Ovary (tissue), 10 donors: ENCODE measurements at regions of chr7 and their contacts with region 1.

Region 1: GRCh38 chr7:5494683-5495561 is 71.3 kb upstream of the TNRC18 start:
- DNase-seq: peak; percentile 69 to 86 (median 83)
- H3K4me3 ChIP-seq: no peak overlapping the region
- H3K27ac ChIP-seq: no peak overlapping the region
- H3K4me1 ChIP-seq: peaks cover 9% of the 10 kb centered on the region
- H3K27me3 ChIP-seq: no peaks in the 10 kb centered on the region
- CTCF ChIP-seq: peak; percentile 85 to 89 (median 89)
- EP300 ChIP-seq: no peak
- POLR2A ChIP-seq: no peak

Region 2: GRCh38 chr7:5557920-5558401 is 63.0 kb after region 1 on chr7:
- intact Hi-C with region 1: loop called in 3 of 4 experiments (anchors 1 to 2 kb)
- DNase-seq: peak; percentile 40 to 62 (median 61)
- H3K4me3 ChIP-seq: peak overlapping the region; percentile 22
- H3K27ac ChIP-seq: peak overlapping the region; percentile 98 to 99
- H3K4me1 ChIP-seq: peaks cover 12% of the 10 kb centered on the region
- H3K27me3 ChIP-seq: no peaks in the 10 kb centered on the region
- CTCF ChIP-seq: no peak
- EP300 ChIP-seq: no peak
- POLR2A ChIP-seq: no peak

Region 3: DNA sequence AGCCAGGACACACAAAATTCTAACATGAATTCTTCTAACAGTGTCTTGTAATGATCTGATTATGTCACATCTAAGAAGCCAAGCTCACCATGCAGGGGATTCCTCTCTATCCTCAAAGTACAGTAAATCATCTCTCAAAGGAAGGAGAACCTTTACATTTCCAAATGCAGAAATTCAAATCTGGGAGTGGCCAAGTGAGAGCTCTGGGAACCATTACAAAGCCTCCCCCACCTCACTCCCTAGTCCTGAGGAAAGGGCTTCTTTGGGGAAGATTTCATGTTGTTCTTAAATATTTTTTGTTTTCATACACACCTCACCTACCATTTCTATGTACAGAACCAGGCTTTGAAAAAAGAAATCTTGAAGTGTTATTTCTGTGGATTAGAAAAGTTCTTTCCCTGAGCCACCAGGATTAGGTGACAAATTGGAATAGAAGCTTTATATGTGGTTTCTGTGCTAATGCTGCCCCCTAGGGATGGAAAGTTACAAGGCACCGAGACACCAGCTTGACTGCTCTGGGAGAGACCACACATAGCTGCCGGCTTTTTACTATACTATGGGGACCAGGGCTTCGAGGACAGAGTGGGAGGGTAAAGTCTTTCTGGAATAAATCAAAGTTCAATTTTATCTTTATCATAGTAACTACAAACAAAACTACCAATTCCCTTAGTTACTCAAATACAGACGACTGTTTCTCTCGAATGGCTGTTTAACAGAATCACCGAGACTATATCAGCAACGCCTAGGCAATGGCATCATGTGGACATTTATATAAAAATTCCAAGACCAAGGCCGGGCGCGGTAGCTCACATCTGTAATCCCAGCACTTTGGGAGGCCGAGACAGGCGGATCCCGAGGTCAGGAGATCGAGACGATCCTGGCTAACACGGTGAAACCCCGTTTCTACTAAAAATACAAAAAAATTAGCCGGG is 170.4 kb after region 1 on chr7:
- intact Hi-C with region 1: loop called in 3 of 4 experiments (anchors 5 to 10 kb)
- DNase-seq: peak; percentile 58 to 85 (median 73)
- H3K4me3 ChIP-seq: no peak overlapping the region
- H3K27ac ChIP-seq: no peak overlapping the region
- H3K4me1 ChIP-seq: no peaks in the 10 kb centered on the region
- H3K27me3 ChIP-seq: no peaks in the 10 kb centered on the region
- CTCF ChIP-seq: peak; percentile 66 to 92 (median 90)
- EP300 ChIP-seq: no peak
- POLR2A ChIP-seq: no peak

Region 4: GRCh38 chr7:5677538-5678294 is 182.8 kb after region 1 on chr7:
- intact Hi-C with region 1: loop called in 3 of 4 experiments (anchors 5 to 10 kb)
- DNase-seq: peak; percentile 57 to 79 (median 70)
- H3K4me3 ChIP-seq: no peak overlapping the region
- H3K27ac ChIP-seq: no peak overlapping the region
- H3K4me1 ChIP-seq: peaks cover 6% of the 10 kb centered on the region
- H3K27me3 ChIP-seq: no peaks in the 10 kb centered on the region
- CTCF ChIP-seq: peak; percentile 50 to 63 (median 63)
- EP300 ChIP-seq: no peak
- POLR2A ChIP-seq: no peak

Region 5: DNA sequence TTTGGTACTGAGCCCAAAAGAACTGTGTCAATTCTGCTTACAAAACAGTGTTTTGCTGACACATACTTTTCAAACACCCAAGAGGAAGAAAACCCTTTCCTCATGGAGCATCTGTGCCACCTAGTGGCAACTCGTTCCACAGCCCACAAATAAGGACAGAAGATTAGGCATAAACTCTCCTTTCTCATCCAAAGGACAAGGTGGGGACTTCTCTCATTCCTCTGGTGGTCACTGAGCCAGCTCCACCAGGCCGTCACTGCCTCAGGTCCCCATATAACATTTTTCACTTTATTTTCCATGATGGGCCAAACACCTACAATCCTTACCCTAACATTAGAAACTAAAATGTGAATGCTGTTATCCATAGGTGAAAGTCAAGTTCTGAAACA is 209.6 kb after region 1 on chr7:
- intact Hi-C with region 1: loop called (anchors 2 to 10 kb)
- DNase-seq: peak; percentile 76 to 90 (median 81)
- H3K4me3 ChIP-seq: no peak overlapping the region
- H3K27ac ChIP-seq: no peak overlapping the region
- H3K4me1 ChIP-seq: peaks cover 7% of the 10 kb centered on the region
- H3K27me3 ChIP-seq: no peaks in the 10 kb centered on the region
- CTCF ChIP-seq: peak; percentile 90 to 93 (median 93)
- EP300 ChIP-seq: no peak
- POLR2A ChIP-seq: no peak